ENCODE measurements at regions of chr1 and their contacts with region 1.

Region 1: GRCh38 chr1:186985889-186986491 is 157.2 kb downstream of the PLA2G4A start:
- DNase-seq: peak; percentile 26 to 59 (median 29)
- ATAC-seq: peak; percentile 91
- H3K4me3 ChIP-seq: no peak overlapping the region
- H3K27ac ChIP-seq: no peak overlapping the region
- H3K4me1 ChIP-seq: no peaks in the 10 kb centered on the region
- H3K27me3 ChIP-seq: no peaks in the 10 kb centered on the region
- CTCF ChIP-seq: peak; percentile 57 to 79 (median 64); a peak in 5 of 6 replicates
- EP300 ChIP-seq: no peak
- POLR2A ChIP-seq: no peak
- RAD21 ChIP-seq: peak; percentile 95

Region 2: DNA sequence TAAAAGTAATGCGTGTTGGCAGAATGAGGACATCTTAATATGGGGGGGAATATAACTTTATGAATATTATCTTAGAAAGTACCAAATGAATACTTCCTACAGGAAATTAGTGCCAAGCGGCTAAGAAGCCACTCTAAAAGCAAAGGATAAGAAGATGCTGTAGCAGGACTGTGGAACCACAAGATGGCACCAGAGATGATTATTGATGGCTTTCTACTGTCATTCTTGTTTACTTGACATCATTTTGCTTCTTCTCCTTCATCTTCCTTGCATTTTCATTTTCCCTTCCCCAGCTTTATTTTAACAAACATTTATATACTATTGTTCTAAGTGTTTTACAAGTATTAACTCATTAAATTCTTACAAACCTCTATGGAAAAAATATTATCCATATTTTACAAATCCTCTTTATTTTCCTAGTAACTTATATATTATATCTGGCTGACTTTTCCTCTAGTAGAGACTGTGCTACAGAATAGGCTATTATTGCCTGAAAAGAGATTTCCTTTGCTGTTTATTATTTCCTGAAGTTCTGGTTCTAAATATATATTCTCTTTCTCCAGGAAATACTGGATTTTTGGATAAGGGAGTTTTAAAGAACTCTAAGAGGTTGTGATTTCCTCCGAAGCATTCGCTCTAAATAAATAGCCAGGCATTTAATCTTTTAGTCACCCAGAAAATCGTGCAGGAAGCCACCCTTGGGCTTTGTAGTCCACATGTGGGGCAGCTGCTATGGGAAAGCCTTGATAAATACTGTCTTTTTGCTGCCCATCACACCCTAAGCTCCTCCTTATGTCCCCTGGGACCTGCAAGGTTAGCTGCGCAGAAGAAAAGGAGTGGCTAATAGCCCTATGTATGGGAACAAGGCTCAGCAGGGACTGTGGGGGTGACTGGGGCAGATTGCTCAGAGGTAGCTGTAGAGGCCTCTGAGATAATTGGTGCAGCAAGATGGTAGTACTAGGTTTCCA is 680.7 kb before region 1 on chr1:
- CTCF ChIA-PET with region 1: interaction called, 3 read pairs
- POLR2A ChIA-PET with region 1: no interaction called
- in situ Hi-C with region 1: no loop called
- intact Hi-C with region 1: loop called (anchors 5 kb)
- DNase-seq: peak; percentile 43 to 55 (median 52)
- ATAC-seq: peak; percentile 83
- H3K4me3 ChIP-seq: no peak overlapping the region
- H3K27ac ChIP-seq: no peak overlapping the region
- H3K4me1 ChIP-seq: no peaks in the 10 kb centered on the region
- H3K27me3 ChIP-seq: peaks cover 5 to 7% of the 10 kb centered on the region in 2 experiments; a peak in 3 of 5 replicates
- CTCF ChIP-seq: peak; percentile 50 to 73 (median 62); a peak in 5 of 6 replicates
- EP300 ChIP-seq: no peak
- POLR2A ChIP-seq: no peak
- RAD21 ChIP-seq: peak; percentile 38 to 69; a peak in 3 of 4 replicates

Region 3: DNA sequence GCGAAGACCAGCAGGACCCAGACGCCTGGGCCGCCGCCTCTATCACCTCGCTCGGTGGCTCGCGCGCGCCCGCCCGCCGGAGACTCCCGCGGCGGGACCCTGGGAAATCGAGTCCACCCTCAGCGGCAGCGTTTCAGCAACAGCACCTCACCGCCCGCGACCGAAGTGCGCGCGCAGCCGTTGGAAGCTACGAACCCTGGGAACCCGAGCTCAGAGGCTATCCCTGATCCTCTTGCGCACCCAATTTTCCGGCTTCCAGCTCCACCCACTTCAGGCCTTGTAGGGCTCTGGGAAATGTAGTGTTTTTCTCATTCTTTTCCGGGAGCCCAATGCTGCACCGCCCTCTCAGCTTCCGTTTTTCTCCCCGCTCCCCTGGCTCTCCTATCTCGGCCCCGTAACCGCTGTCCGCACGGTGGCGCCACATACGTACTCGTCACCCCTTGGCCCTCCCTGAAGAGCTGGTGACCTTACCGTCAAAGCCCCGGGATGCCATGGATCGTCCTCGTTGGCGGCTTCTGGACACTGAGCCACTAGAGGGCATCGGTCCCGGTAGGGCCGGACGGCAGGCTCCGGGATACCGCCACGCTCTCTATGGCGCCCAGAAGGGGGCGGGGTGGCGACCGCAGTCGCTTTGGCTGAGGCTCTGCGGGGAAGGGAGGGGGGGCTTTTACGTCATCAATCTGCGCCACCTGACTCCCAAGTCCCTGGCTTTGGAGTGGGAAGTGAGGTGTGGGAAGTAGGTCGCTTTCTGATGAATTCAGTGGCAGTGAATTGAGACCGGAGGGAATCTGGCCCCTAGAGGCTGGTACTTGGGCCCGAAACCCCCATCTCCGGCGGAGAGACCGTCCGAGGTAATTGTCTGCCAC is 610.7 kb before region 1 on chr1 and contains the starts of genes ODR4 and TPR:
- CTCF ChIA-PET with region 1: interaction called, 4 read pairs
- POLR2A ChIA-PET with region 1: no interaction called
- in situ Hi-C with region 1: no loop called
- intact Hi-C with region 1: loop called (anchors 1 kb)
- DNase-seq: peak; percentile 97 to 100 (median 98)
- ATAC-seq: peak; percentile 94
- H3K4me3 ChIP-seq: peak within 1 kb of the TSS; percentile 78
- H3K27ac ChIP-seq: peak within 1 kb of the TSS; percentile 91
- H3K4me1 ChIP-seq: no peaks in the 10 kb centered on the region
- H3K27me3 ChIP-seq: no peaks in the 10 kb centered on the region
- CTCF ChIP-seq: peak; percentile 96 to 100 (median 98)
- EP300 ChIP-seq: peak; percentile 54
- POLR2A ChIP-seq: peak; percentile 96
- RAD21 ChIP-seq: peak; percentile 44 to 53; a peak in 3 of 4 replicates
- polyA plus RNA-seq, gene ODR4: 52.6 to 63.9 TPM
- polyA plus RNA-seq, gene TPR: 48.5 to 54.3 TPM

Region 4: GRCh38 chr1:186404454-186405051 is 581.4 kb before region 1 on chr1:
- CTCF ChIA-PET with region 1: interaction called, 10 read pairs
- POLR2A ChIA-PET with region 1: no interaction called
- in situ Hi-C with region 1: no loop called
- intact Hi-C with region 1: loop called (anchors 1 kb)
- DNase-seq: peak; percentile 44 to 69 (median 56)
- ATAC-seq: peak; percentile 86
- H3K4me3 ChIP-seq: no peak overlapping the region
- H3K27ac ChIP-seq: peak overlapping the region; percentile 20; the same call in 1 of the 3 replicates
- H3K4me1 ChIP-seq: no peaks in the 10 kb centered on the region; a peak in 1 of 5 replicates
- H3K27me3 ChIP-seq: no peaks in the 10 kb centered on the region
- CTCF ChIP-seq: peak; percentile 60 to 86 (median 81); a peak in 5 of 6 replicates
- EP300 ChIP-seq: no peak
- POLR2A ChIP-seq: no peak
- RAD21 ChIP-seq: peak; percentile 70 to 74

Region 5: GRCh38 chr1:186482661-186483255 is 503.2 kb before region 1 on chr1:
- CTCF ChIA-PET with region 1: interaction called, 5 read pairs
- POLR2A ChIA-PET with region 1: no interaction called
- in situ Hi-C with region 1: loop called (anchors 10 kb)
- intact Hi-C with region 1: loop called (anchors 1 kb)
- DNase-seq: peak; percentile 56 to 67 (median 62)
- ATAC-seq: peak; percentile 90
- H3K4me3 ChIP-seq: no peak overlapping the region
- H3K27ac ChIP-seq: no peak overlapping the region
- H3K4me1 ChIP-seq: no peaks in the 10 kb centered on the region
- H3K27me3 ChIP-seq: no peaks in the 10 kb centered on the region
- CTCF ChIP-seq: peak; percentile 69 to 85 (median 72)
- EP300 ChIP-seq: no peak
- POLR2A ChIP-seq: no peak
- RAD21 ChIP-seq: peak; percentile 79 to 92

Region 6: GRCh38 chr1:186828611-186829454 is 157.2 kb before region 1 on chr1 and contains the start of gene PLA2G4A:
- CTCF ChIA-PET with region 1: no interaction called
- POLR2A ChIA-PET with region 1: no interaction called
- in situ Hi-C with region 1: no loop called
- intact Hi-C with region 1: no loop called
- DNase-seq: peak in 1 of 4 experiments; percentile 2
- ATAC-seq: no peak
- H3K4me3 ChIP-seq: no peak within 1 kb of the TSS
- H3K27ac ChIP-seq: no peak within 1 kb of the TSS
- H3K4me1 ChIP-seq: no peaks in the 10 kb centered on the region
- H3K27me3 ChIP-seq: no peaks in the 10 kb centered on the region
- CTCF ChIP-seq: no peak
- EP300 ChIP-seq: no peak
- POLR2A ChIP-seq: no peak
- RAD21 ChIP-seq: no peak
- polyA plus RNA-seq, gene PLA2G4A: 0.15 TPM in 1 of 2 experiments, not detected in the other

Measured in K562 (cell line).